IMR-90 (cell line): ENCODE measurements at regions of chr16 and their contacts with region 1.

Region 1: DNA sequence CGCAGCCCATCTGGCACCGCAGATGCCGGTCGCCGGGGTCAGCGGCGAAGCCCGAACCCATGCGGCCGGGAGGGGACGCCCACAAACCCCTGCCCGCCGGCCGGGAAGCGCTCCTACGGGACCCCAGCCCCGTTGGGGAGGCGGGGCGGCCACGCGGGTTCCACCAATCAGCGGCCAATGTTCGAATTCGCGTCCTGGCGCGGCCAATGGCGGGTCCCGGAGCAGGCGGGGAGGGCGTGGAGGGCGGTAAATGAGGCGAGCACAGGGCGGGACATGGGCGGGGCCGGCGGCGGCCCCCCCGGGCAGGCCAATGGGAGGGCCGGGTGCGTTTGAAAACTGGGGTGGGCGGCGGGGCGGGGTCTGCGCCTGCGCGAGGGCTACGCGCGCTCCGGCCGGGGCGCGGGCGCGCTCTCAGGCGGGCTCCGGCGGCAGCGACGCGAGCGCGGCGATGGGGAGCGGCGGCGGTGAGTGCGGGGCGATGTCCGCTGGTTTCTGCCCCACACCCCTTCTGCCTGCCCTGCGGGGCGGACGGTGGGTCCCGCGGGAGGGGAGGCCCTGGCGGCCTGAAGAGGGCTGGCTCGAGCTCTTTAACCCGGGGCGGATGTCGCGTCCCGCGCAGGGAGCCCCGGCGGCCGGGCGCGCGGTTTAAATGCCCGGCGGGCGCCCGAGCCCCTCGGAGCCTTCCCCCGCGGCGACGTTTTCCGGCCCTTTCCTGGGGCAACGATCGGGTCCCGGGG is at the start of gene CCNF:
- DNase-seq: peak; percentile 92
- ATAC-seq: peak; percentile 99
- H3K4me3 ChIP-seq: peak within 1 kb of the TSS; percentile 89
- H3K27ac ChIP-seq: peak within 1 kb of the TSS; percentile 60
- H3K4me1 ChIP-seq: peaks cover 4% of the 10 kb centered on the region
- H3K27me3 ChIP-seq: no peaks in the 10 kb centered on the region
- CTCF ChIP-seq: no peak
- POLR2A ChIP-seq: 0 out of 2 replicates have a peak, but pooled peaks have one; percentile 43
- RAD21 ChIP-seq: no peak
- total RNA-seq, gene CCNF: 19.2 and 20.1 TPM in 2 replicates

Region 2: DNA sequence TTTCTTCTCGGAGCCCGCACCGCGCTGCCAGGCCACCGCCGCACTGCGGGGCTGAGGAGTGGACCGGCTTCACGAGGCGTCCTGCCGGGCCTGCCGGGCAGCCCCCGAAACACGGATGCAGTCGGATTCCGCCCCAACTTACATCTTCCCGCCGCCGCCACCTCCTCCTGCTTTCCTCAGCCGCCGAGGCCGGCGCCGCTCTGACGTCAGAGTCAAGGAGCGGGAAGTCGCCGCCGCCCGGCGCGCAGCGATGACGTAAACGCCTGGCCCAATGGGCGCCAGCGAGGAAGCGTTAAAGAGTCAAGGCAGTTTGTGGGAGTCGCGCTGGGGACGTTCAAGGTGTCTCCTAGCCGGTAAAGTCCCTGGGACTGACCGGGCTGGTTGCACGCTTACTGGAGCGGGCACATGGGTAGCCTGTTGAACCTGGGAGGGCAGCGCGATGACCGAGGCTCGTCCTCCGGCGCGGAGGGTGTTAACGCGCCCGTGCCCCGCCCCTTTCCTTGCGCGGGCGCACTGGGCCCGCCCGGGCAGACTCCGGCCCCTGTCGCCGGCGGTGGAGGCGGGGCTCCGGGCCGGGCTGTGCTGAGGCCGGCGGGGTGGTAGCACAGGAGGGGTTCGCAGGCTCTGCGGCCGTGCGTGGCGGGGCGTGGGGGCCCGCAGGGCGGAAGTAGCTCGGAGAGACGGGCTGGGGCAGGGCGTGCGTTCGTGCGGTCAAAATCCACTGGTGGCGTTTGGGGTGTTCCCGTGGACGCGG is 161.1 kb before region 1 on chr16 and contains the start of gene RNPS1:
- CTCF ChIA-PET with region 1: no interaction called
- POLR2A ChIA-PET with region 1: no interaction called
- dilution Hi-C with region 1: no loop called
- in situ Hi-C with region 1: loop called (anchors 10 kb)
- intact Hi-C with region 1: loop called (anchors 2 kb)
- DNase-seq: peak; percentile 94
- ATAC-seq: peak; percentile 96
- H3K4me3 ChIP-seq: peak within 1 kb of the TSS; percentile 60
- H3K27ac ChIP-seq: peak within 1 kb of the TSS; percentile 84
- H3K4me1 ChIP-seq: peaks cover 8% of the 10 kb centered on the region
- H3K27me3 ChIP-seq: no peaks in the 10 kb centered on the region
- CTCF ChIP-seq: no peak
- POLR2A ChIP-seq: peak; percentile 98
- RAD21 ChIP-seq: no peak
- total RNA-seq, gene RNPS1: 57.5 and 65.0 TPM in 2 replicates

Region 3: GRCh38 chr16:2278272-2278608 is 151.0 kb before region 1 on chr16:
- CTCF ChIA-PET with region 1: no interaction called
- POLR2A ChIA-PET with region 1: no interaction called
- dilution Hi-C with region 1: no loop called
- in situ Hi-C with region 1: loop called (anchors 10 kb)
- intact Hi-C with region 1: no loop called
- DNase-seq: no peak
- ATAC-seq: no peak
- H3K4me3 ChIP-seq: no peak overlapping the region
- H3K27ac ChIP-seq: no peak overlapping the region
- H3K4me1 ChIP-seq: no peaks in the 10 kb centered on the region
- H3K27me3 ChIP-seq: peaks cover 35% of the 10 kb centered on the region
- CTCF ChIP-seq: no peak
- POLR2A ChIP-seq: no peak
- RAD21 ChIP-seq: no peak

Region 4: GRCh38 chr16:2340564-2341455 is 88.4 kb before region 1 on chr16 and contains the start of gene ABCA3:
- CTCF ChIA-PET with region 1: no interaction called
- POLR2A ChIA-PET with region 1: no interaction called
- dilution Hi-C with region 1: no loop called
- in situ Hi-C with region 1: no loop called
- intact Hi-C with region 1: loop called (anchors 1 kb)
- DNase-seq: peak; percentile 84
- ATAC-seq: peak; percentile 97
- H3K4me3 ChIP-seq: peak within 1 kb of the TSS; percentile 57
- H3K27ac ChIP-seq: no peak within 1 kb of the TSS
- H3K4me1 ChIP-seq: no peaks in the 10 kb centered on the region
- H3K27me3 ChIP-seq: peaks cover 46% of the 10 kb centered on the region
- CTCF ChIP-seq: peak; percentile 100
- POLR2A ChIP-seq: no peak
- RAD21 ChIP-seq: peak; percentile 76
- total RNA-seq, gene ABCA3: 0.18 TPM in 1 of 2 replicates, not detected in the other

Region 5: DNA sequence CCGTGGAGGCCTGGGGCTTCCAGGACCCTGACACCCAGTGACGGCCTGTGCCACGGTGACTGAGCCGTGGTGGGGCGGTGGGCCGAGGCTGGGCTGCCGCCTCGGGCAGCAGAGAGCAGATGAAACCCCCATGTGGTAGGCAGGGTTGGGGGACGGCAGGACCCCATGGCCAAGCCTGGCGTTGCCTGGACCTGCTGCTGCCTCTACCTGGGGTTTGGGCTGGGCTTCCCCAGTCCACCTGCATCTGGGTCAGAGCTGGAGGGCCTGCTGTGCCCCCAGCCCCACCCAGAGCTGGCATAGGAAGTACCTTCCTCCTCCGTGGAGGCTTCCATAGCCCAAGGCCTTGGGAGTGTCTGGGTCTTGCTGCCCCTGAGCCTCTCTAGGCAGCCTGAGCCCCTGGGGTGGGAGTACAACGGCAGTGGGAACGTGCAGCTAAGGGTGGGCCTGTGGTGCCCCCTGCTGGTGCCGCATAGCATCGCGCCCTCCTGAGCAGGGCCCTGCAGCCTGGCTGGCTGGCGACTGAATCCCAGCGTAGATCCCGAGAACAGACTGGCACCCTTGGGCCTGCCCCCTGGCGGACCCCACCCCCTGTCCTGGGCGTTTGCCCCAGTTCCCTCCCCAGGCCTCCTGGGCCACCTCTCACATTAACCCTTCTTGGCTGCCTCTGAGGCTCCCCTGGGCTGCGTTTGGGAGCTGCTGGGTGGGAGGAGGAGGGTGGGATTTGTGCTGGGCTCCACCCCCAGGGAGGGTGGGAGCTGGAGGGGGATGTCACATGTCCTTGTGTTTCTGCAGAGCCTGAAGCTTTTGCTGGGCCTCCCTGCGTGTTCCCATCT is 71.9 kb after region 1 on chr16:
- CTCF ChIA-PET with region 1: no interaction called
- POLR2A ChIA-PET with region 1: no interaction called
- dilution Hi-C with region 1: no loop called
- in situ Hi-C with region 1: no loop called
- intact Hi-C with region 1: loop called (anchors 2 kb)
- DNase-seq: peak; percentile 69
- ATAC-seq: peak; percentile 97
- H3K4me3 ChIP-seq: no peak overlapping the region
- H3K27ac ChIP-seq: no peak overlapping the region
- H3K4me1 ChIP-seq: peaks cover 9% of the 10 kb centered on the region
- H3K27me3 ChIP-seq: no peaks in the 10 kb centered on the region
- CTCF ChIP-seq: peak; percentile 96
- POLR2A ChIP-seq: 0 out of 2 replicates have a peak, but pooled peaks have one; percentile 29
- RAD21 ChIP-seq: peak; percentile 95